GM12878 (cell line): ENCODE measurements at regions of chr12 and their contacts with region 1.

Region 1: DNA sequence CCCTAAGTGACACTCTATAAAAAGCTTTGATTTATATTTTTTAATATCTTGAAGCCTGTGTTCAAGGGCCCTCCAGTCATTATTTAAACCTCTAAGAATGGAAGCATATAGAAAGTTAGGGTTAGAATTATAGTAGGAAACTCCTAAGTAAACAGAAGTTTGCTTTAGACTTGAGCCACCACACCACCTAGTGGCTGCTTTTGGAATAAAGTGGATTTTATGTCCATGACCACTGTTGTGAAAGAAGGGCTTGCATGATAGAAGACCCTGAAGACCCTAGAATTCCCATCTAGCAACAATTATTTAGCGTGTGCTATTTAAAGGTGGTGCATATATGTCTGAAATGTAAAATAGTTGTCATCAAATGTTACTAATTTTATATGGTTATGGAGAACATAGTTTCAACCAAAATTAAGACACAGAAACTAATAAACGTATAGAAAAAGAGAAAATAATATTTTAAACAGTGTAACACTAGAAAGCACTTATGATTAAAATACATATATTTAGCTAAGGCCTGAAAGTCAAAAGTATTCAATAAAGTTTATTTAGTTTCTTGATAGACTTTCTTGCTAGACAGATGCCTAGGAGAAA is 21.3 kb downstream of the LRRIQ1 start:
- DNase-seq: no peak
- ATAC-seq: peak; percentile 70
- H3K4me3 ChIP-seq: no peak overlapping the region
- H3K27ac ChIP-seq: no peak overlapping the region
- H3K4me1 ChIP-seq: no peaks in the 10 kb centered on the region
- H3K27me3 ChIP-seq: no peaks in the 10 kb centered on the region
- CTCF ChIP-seq: peak; percentile 62 to 74 (median 73); a peak in 5 of 6 replicates
- EP300 ChIP-seq: no peak
- POLR2A ChIP-seq: no peak
- RAD21 ChIP-seq: peak; percentile 54

Region 2: DNA sequence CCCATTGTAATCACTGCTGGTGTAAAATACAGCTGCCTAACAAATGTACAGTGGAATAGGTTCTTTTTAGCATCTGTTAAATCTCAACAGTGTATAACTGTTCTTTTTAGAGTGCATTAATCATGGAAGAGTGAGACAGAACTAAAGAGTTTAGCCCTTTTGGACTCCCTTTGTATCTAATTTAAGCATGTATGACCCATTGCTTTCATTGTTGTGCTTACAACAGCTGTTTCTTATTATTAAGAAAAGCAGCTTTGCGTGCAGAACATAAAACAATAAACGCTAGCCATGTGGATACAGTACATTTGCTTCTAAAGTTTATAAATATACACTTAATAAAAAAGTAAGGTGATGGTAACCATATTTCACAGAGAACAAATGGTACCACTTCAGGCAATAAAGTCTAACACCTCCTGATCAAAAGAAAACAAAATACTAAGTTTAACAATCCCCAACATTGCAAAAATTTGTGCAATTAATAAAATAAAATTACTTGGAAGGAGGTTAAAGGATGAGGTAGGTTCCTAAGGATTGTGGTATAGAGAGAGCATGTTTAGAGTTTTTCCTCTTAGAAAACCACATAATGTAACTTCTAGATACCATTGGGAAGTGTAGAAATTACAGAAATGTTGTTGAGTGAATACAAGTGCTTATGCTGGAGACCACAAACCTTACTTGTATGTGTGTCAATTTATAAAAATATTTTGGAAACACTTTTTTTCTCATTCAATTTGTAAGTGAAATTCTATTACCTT is 593.5 kb before region 1 on chr12:
- CTCF ChIA-PET with region 1: no interaction called
- POLR2A ChIA-PET with region 1: no interaction called
- RAD21 ChIA-PET with region 1: no interaction called
- SMC1A ChIA-PET with region 1: no interaction called
- in situ Hi-C with region 1: no loop called
- intact Hi-C with region 1: no loop called
- DNase-seq: no peak
- ATAC-seq: no peak
- H3K4me3 ChIP-seq: no peak overlapping the region
- H3K27ac ChIP-seq: no peak overlapping the region
- H3K4me1 ChIP-seq: no peaks in the 10 kb centered on the region
- H3K27me3 ChIP-seq: no peaks in the 10 kb centered on the region
- CTCF ChIP-seq: no peak
- EP300 ChIP-seq: no peak
- POLR2A ChIP-seq: no peak
- RAD21 ChIP-seq: no peak

Region 3: DNA sequence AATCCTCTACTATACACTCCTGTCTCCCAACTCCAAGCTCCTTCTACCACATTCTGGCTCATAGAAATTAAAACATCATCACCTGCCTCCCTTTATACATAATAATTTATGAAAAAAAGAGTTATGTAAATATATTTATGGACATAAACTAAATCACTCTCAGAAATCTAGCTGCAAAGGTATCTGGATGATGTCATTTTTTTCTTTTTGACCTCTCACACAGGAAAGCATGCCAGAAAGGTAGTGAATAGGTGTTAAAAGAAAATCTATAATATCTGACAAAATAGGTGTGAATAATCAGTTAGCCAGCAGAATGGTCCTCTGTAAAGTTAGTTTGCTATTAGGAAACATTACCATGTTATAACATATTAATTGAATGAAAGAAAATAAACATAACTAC is 13.6 kb before region 1 on chr12:
- CTCF ChIA-PET with region 1: interaction called, 18 read pairs
- POLR2A ChIA-PET with region 1: no interaction called
- RAD21 ChIA-PET with region 1: no interaction called
- SMC1A ChIA-PET with region 1: no interaction called
- in situ Hi-C with region 1: no loop called
- intact Hi-C with region 1: no loop called
- DNase-seq: no peak
- ATAC-seq: no peak
- H3K4me3 ChIP-seq: no peak overlapping the region
- H3K27ac ChIP-seq: no peak overlapping the region
- H3K4me1 ChIP-seq: no peaks in the 10 kb centered on the region
- H3K27me3 ChIP-seq: no peaks in the 10 kb centered on the region
- CTCF ChIP-seq: no peak
- EP300 ChIP-seq: no peak
- POLR2A ChIP-seq: no peak
- RAD21 ChIP-seq: no peak

Region 4: DNA sequence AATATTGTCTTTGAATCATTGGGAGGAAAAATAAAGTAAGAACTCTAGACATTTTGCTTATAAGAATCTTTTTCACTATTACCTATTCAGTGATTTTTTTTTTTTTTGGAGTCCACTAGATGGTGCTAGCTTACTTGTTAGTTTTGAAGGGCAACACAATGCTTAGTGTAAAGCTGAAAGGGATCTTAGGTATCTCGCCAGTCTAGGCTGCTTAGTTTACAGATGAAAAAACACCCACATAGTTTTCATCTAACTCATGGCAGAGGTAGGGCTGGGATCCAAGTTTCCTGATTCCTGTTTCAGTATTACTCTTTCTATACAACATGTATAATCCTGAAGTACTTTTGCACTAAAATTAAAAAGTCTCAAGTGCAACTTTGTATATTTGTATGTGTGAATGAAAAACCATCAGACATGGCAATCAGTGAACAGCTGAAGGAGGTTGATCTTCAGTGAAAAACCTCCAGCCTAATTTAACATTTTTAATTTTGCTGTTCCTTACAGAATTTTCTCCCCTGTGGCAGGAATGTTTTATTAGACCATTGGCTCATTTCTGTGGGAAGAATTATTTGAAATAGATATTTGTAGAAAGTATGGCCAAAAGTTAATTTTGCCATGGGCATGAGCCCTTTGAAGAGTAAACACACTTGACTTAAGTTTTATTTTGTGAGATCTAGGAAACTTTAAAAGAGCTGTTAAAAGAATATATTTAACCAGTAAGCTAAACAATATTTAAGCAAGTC is 19.4 kb after region 1 on chr12:
- CTCF ChIA-PET with region 1: interaction called, 12 read pairs
- POLR2A ChIA-PET with region 1: no interaction called
- RAD21 ChIA-PET with region 1: interaction called, 3 read pairs
- SMC1A ChIA-PET with region 1: no interaction called
- in situ Hi-C with region 1: no loop called
- intact Hi-C with region 1: no loop called
- DNase-seq: no peak
- ATAC-seq: peak; percentile 88
- H3K4me3 ChIP-seq: no peak overlapping the region
- H3K27ac ChIP-seq: no peak overlapping the region
- H3K4me1 ChIP-seq: no peaks in the 10 kb centered on the region
- H3K27me3 ChIP-seq: no peaks in the 10 kb centered on the region
- CTCF ChIP-seq: peak; percentile 28 to 45 (median 30); a peak in 2 of 6 replicates
- EP300 ChIP-seq: no peak
- POLR2A ChIP-seq: no peak
- RAD21 ChIP-seq: peak; percentile 48; the same call in 1 of the 2 replicates